B cell (primary cell): ENCODE measurements at regions of chr9 and their contacts with region 1.

Region 1: GRCh38 chr9:136118320-136119060 is at the start of gene TMEM250:
- DNase-seq: peak; percentile 99
- ATAC-seq: peak; percentile 87
- H3K4me3 ChIP-seq: peak within 1 kb of the TSS; percentile 32 to 76 (median 64)
- H3K4me3 Mint-ChIP-seq: peak within 1 kb of the TSS; percentile 87
- H3K27ac ChIP-seq: peak within 1 kb of the TSS; percentile 51 to 94
- H3K27ac Mint-ChIP-seq: peak within 1 kb of the TSS; percentile 94
- H3K4me1 ChIP-seq: peaks cover 15 to 29% of the 10 kb centered on the region in 2 donors
- H3K4me1 Mint-ChIP-seq: peaks cover 14% of the 10 kb centered on the region
- H3K27me3 ChIP-seq: no peaks in the 10 kb centered on the region
- H3K27me3 Mint-ChIP-seq: no peaks in the 10 kb centered on the region
- CTCF ChIP-seq: no peak
- total RNA-seq, gene TMEM250: 29.6 and 30.4 TPM in 2 replicates

Region 2: DNA sequence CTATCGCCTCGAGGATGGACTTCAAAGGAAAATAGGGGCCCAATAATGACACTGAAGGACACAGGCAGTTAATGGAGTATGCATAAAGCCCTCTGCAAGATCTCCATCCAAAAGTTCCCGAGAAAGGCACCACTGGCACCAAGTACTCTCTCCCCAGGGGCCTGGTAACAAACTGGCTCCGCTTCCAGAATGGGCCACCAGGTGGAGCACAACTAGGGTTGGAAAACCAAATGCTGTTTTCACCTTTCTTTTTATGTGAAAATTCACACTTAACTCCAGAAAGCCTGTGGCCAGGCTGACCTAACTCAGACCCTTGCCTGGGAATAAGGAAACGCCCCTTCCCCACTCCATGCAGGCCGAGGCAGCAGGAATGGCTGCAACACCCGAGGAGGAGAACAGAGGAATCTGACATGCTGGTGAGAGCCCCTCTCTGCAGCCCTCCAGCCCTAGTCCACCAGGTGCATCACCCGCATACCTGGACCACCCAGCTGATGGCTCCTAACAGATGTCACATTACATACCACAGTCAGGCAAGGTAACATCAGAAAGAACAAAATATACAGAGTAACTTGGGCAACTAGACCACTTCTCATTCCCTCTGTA is 253.9 kb before region 1 on chr9:
- CTCF ChIA-PET with region 1: interaction called, 37 read pairs
- POLR2A ChIA-PET with region 1: no interaction called
- intact Hi-C with region 1: no loop called
- DNase-seq: peak; percentile 66
- ATAC-seq: peak; percentile 56
- H3K4me3 ChIP-seq: no peak overlapping the region
- H3K4me3 Mint-ChIP-seq: no peak overlapping the region
- H3K27ac ChIP-seq: no peak overlapping the region
- H3K27ac Mint-ChIP-seq: no peak overlapping the region
- H3K4me1 ChIP-seq: peaks cover 0 to 6% of the 10 kb centered on the region in 2 donors
- H3K4me1 Mint-ChIP-seq: peaks cover 5% of the 10 kb centered on the region
- H3K27me3 ChIP-seq: no peaks in the 10 kb centered on the region
- H3K27me3 Mint-ChIP-seq: no peaks in the 10 kb centered on the region
- CTCF ChIP-seq: peak; percentile 96

Region 3: GRCh38 chr9:135971892-135972291 is 146.6 kb before region 1 on chr9:
- CTCF ChIA-PET with region 1: interaction called, 124 read pairs
- POLR2A ChIA-PET with region 1: no interaction called
- intact Hi-C with region 1: loop called (anchors 1 kb)
- DNase-seq: peak; percentile 57
- ATAC-seq: no peak
- H3K4me3 ChIP-seq: no peak overlapping the region
- H3K4me3 Mint-ChIP-seq: no peak overlapping the region
- H3K27ac ChIP-seq: no peak overlapping the region
- H3K27ac Mint-ChIP-seq: no peak overlapping the region
- H3K4me1 ChIP-seq: peaks cover 0 to 8% of the 10 kb centered on the region in 2 donors
- H3K4me1 Mint-ChIP-seq: peaks cover 7% of the 10 kb centered on the region
- H3K27me3 ChIP-seq: peaks cover 0 to 17% (median 1%) of the 10 kb centered on the region in 4 experiments
- H3K27me3 Mint-ChIP-seq: peaks cover 29% of the 10 kb centered on the region
- CTCF ChIP-seq: no peak

Region 4: DNA sequence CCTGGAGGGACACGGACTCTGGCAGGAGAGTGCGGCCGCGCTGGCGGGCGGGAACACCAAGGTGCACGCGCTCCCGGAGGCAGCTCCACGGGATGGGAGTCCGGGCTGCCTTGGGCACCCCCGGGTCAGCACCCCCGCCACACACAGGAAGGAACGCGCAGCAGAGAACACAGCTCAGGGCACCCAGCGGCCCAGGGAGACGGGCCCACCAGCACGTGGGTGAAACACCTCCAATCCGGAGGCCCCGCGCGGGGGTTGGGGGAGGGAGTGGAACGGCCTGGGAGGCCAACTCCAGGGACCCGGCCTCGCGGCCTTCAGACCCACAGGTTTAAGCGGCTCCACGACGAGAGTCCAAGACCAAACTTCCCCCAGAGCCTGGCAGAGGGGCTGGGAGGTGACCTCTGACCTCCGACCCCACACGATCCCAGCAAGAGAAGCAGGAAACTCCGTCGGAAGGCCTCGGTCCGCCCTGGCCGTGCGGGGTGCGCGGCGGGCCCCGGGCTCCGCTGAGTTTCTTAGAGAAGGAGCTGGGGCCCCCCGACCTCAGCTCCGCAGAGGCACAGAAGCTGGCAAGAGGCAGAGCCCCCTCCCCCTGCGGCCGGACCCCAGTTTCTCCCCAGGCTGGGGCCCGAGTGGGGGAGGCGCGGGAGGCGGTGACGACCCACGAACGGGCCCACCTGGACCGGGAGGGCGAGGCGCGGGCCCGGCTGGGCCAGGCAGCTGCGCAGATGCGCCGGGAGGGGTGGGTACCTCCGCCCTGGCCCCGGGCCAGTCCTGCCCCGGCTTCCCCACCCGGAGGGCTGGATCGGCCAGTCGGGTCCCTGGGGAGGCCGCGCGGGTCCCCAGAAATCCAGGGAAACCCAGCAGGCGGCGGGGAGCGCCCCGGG is 24.3 kb before region 1 on chr9:
- CTCF ChIA-PET with region 1: interaction called, 56 read pairs
- POLR2A ChIA-PET with region 1: no interaction called
- intact Hi-C with region 1: loop called (anchors 1 kb)
- DNase-seq: no peak
- ATAC-seq: peak; percentile 41
- H3K4me3 ChIP-seq: peak overlapping the region in 4 of 5 experiments; percentile 15 to 40 (median 36)
- H3K4me3 Mint-ChIP-seq: peak overlapping the region; percentile 68
- H3K27ac ChIP-seq: no peak overlapping the region
- H3K27ac Mint-ChIP-seq: no peak overlapping the region
- H3K4me1 ChIP-seq: peaks cover 10 to 14% of the 10 kb centered on the region in 2 donors
- H3K4me1 Mint-ChIP-seq: peaks cover 9% of the 10 kb centered on the region
- H3K27me3 ChIP-seq: peaks cover 0 to 52% (median 10%) of the 10 kb centered on the region in 4 experiments
- H3K27me3 Mint-ChIP-seq: peaks cover 29% of the 10 kb centered on the region
- CTCF ChIP-seq: no peak

Region 5: GRCh38 chr9:136211441-136212344 is 93.2 kb after region 1 on chr9:
- CTCF ChIA-PET with region 1: no interaction called
- POLR2A ChIA-PET with region 1: no interaction called
- intact Hi-C with region 1: no loop called
- DNase-seq: no peak
- ATAC-seq: peak; percentile 40
- H3K4me3 ChIP-seq: no peak overlapping the region
- H3K4me3 Mint-ChIP-seq: no peak overlapping the region
- H3K27ac ChIP-seq: no peak overlapping the region
- H3K27ac Mint-ChIP-seq: no peak overlapping the region
- H3K4me1 ChIP-seq: no peaks in the 10 kb centered on the region
- H3K4me1 Mint-ChIP-seq: peaks cover 21% of the 10 kb centered on the region
- H3K27me3 ChIP-seq: no peaks in the 10 kb centered on the region
- H3K27me3 Mint-ChIP-seq: no peaks in the 10 kb centered on the region
- CTCF ChIP-seq: no peak

Region 6: DNA sequence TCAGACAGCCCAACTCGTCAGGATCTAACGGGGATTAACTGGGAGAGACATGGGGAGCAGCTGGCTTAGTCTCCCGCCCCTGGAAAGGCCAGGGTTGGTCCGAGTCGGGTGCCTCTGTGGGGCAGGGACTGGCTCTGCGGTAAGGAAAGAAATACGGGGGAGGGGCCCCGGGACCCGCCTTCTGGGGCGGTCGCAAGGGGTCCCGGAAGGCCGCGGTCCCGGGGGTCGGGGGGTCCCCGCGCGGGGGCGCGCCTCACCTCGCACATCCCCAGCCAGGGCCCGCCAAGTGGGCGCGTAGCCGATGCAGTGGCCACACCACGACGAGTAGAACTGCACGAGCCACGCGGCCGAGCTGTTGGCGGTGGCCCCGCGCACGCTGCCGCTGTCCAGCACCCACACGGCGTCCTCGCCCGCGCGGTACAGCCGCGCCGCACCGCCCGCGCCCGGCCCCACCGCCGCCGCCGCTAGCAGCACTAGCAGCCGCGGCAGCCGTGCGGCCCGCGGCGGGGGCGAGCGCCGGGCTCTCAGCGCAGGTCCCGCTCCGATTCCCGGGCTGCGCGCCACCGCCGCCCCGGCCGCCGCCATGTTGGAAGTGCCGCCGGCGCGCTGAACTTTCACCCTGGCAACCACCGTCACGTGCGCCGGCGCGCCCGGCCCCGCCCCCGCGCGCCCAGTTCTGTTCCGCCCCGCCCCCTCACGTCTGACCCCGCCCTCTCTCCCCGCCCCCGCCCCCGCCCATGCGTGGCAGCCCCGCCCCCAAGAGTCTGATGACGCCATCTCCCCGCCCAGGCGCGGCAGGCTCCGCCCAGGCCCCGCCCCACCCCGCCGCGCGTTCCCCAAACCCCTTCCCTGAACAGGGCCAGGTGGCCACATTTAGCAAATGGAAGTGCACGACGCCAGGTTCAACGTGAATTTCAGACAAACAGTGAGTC is 127.0 kb after region 1 on chr9 and contains the start of gene QSOX2:
- CTCF ChIA-PET with region 1: no interaction called
- POLR2A ChIA-PET with region 1: no interaction called
- intact Hi-C with region 1: loop called (anchors 2 kb)
- DNase-seq: peak; percentile 91
- ATAC-seq: peak; percentile 71
- H3K4me3 ChIP-seq: peak within 1 kb of the TSS; percentile 66 to 97 (median 90)
- H3K4me3 Mint-ChIP-seq: peak within 1 kb of the TSS; percentile 94
- H3K27ac ChIP-seq: peak within 1 kb of the TSS; percentile 70 to 83
- H3K27ac Mint-ChIP-seq: peak within 1 kb of the TSS; percentile 90
- H3K4me1 ChIP-seq: peaks cover 46 to 51% of the 10 kb centered on the region in 2 donors
- H3K4me1 Mint-ChIP-seq: peaks cover 50% of the 10 kb centered on the region
- H3K27me3 ChIP-seq: no peaks in the 10 kb centered on the region
- H3K27me3 Mint-ChIP-seq: no peaks in the 10 kb centered on the region
- CTCF ChIP-seq: no peak
- total RNA-seq, gene QSOX2: 139 and 141 TPM in 2 replicates

Region 7: GRCh38 chr9:136297016-136297691 is 178.7 kb after region 1 on chr9:
- CTCF ChIA-PET with region 1: no interaction called
- POLR2A ChIA-PET with region 1: no interaction called
- intact Hi-C with region 1: no loop called
- DNase-seq: no peak
- ATAC-seq: no peak
- H3K4me3 ChIP-seq: no peak overlapping the region
- H3K4me3 Mint-ChIP-seq: no peak overlapping the region
- H3K27ac ChIP-seq: no peak overlapping the region
- H3K27ac Mint-ChIP-seq: no peak overlapping the region
- H3K4me1 ChIP-seq: peaks cover 0 to 5% of the 10 kb centered on the region in 2 donors
- H3K4me1 Mint-ChIP-seq: peaks cover 4% of the 10 kb centered on the region
- H3K27me3 ChIP-seq: no peaks in the 10 kb centered on the region
- H3K27me3 Mint-ChIP-seq: no peaks in the 10 kb centered on the region
- CTCF ChIP-seq: no peak